Right cardiac atrium (tissue), 5 donors: ENCODE measurements at regions of chr5 and their contacts with region 1.

Region 1: GRCh38 chr5:150523472-150524350 is 15.8 kb downstream of the NDST1 start:
- DNase-seq: no peak
- ATAC-seq: peak; percentile 53 to 59
- H3K4me3 ChIP-seq: no peak overlapping the region
- H3K27ac ChIP-seq: peak overlapping the region; percentile 83
- H3K4me1 ChIP-seq: peaks cover 31% of the 10 kb centered on the region
- H3K27me3 ChIP-seq: no peaks in the 10 kb centered on the region

Region 2: DNA sequence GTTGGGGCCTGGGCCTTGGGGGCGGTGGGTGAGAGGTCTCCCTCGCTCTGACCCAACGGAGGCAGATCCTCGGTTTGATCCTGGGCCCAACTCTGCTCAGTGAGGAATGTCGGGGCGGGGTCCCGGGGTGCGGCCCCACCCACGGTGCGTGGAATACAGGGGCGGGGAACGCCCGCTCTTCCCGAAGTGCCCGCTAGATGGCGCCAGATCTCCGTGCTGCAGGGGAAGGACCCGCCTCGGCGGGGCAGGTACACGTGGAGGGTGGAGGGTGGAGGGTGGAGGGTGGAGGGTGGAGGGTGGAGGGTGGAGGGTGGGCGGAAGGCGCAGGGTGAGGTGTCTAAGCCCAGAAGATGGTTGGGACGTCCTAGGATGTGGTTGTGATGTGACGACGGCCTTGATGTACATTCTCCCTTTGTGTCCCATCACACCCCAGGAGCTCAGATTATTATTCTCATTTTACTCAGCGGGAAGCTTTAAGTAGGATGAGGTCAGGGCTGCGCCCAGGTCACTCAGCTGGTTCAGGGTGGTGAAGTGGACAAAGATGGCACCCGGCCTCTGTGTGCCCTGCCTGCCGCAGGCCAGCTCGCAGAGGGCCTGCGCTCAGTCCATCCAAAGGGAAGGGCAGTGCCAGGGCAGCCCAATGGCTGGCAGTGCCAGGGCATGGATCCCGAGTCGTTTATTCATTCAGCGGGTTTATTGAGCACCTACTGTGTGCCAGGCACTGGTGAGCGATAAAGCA is 64.7 kb before region 1 on chr5:
- intact Hi-C with region 1: loop called (anchors 2 to 5 kb)
- DNase-seq: peak; percentile 80 to 94 (median 93)
- ATAC-seq: peak; percentile 90 to 93
- H3K4me3 ChIP-seq: peak overlapping the region; percentile 33
- H3K27ac ChIP-seq: no peak overlapping the region
- H3K4me1 ChIP-seq: peaks cover 4% of the 10 kb centered on the region
- H3K27me3 ChIP-seq: no peaks in the 10 kb centered on the region

Region 3: DNA sequence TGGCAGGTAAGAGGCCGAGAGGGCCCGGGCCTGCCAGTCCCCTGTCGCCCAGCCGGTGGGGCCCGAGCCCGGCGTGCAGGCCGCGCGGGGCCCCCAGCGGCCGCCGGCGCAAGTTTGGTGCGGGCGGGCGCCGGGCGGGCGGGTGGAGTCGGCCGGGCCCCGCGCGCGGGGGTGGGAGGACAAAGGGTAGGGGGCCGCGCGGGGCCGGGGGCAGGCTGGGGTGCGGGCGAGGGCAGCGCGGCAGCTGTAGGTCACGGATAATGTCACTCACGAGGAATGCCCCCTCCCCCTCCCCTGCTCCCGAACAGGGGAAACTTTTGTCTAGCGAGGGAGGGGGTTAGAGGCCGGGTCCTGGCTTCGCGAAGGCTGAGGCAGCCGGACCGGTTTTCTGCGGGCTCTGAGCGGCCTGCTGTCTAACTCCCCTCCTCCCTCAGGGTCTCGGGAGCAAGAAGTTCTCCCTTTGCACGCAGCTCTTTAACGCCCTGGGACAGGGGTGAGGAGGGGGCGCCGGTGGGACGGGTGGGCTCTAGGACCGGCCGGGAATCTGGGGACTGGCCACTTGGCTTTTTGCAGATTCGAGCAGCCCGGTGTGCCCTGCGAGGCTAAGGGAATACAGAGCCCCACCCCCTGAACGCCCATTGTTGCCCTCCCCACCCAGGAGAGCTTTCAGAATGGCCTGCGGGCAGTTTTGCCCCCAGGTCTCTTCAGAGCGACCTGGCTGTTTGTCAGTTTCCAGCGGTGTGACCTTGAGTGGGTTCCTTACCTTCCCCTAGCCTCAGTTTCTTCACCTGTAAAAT is 37.1 kb before region 1 on chr5:
- intact Hi-C with region 1: loop called (anchors 5 kb)
- DNase-seq: peak; percentile 60 to 85 (median 80)
- ATAC-seq: peak; percentile 13 to 35
- H3K4me3 ChIP-seq: peak overlapping the region; percentile 100
- H3K27ac ChIP-seq: peak overlapping the region; percentile 99
- H3K4me1 ChIP-seq: peaks cover 35% of the 10 kb centered on the region
- H3K27me3 ChIP-seq: no peaks in the 10 kb centered on the region